Activated CD4-positive, alpha-beta memory T cell treated with anti-CD3 and anti-CD28 coated beads for 36 hours (primary cell): ENCODE measurements at regions of chr5 and their contacts with region 1.

Region 1: GRCh38 chr5:139417214-139417613 is 13.3 kb upstream of the SPATA24 start:
- DNase-seq: no peak
- H3K4me3 Mint-ChIP-seq: no peak overlapping the region
- H3K27ac Mint-ChIP-seq: peak overlapping the region; percentile 96
- H3K4me1 Mint-ChIP-seq: peaks cover 56% of the 10 kb centered on the region
- H3K27me3 Mint-ChIP-seq: no peaks in the 10 kb centered on the region

Region 2: GRCh38 chr5:139341650-139342422 is 75.4 kb before region 1 on chr5 and contains the start of gene PAIP2:
- CTCF ChIA-PET with region 1: no interaction called
- POLR2A ChIA-PET with region 1: interaction called, 3 read pairs
- intact Hi-C with region 1: loop called (anchors 1 kb)
- DNase-seq: peak; percentile 98
- H3K4me3 Mint-ChIP-seq: peak within 1 kb of the TSS; percentile 97
- H3K27ac Mint-ChIP-seq: peak within 1 kb of the TSS; percentile 95
- H3K4me1 Mint-ChIP-seq: peaks cover 46% of the 10 kb centered on the region
- H3K27me3 Mint-ChIP-seq: no peaks in the 10 kb centered on the region
- total RNA-seq, gene PAIP2: 104 to 110 TPM

Region 3: GRCh38 chr5:139403787-139404483 is 13.3 kb before region 1 on chr5 and contains the start of gene SPATA24:
- CTCF ChIA-PET with region 1: interaction called, 16 read pairs
- POLR2A ChIA-PET with region 1: interaction called, 22 read pairs
- intact Hi-C with region 1: loop called (anchors 1 kb)
- DNase-seq: peak; percentile 100
- H3K4me3 Mint-ChIP-seq: peak within 1 kb of the TSS; percentile 91
- H3K27ac Mint-ChIP-seq: peak within 1 kb of the TSS; percentile 99
- H3K4me1 Mint-ChIP-seq: peaks cover 34% of the 10 kb centered on the region
- H3K27me3 Mint-ChIP-seq: no peaks in the 10 kb centered on the region
- total RNA-seq, gene SPATA24: 3.7 to 5.2 TPM

Region 4: GRCh38 chr5:139446956-139447779 is 30.0 kb after region 1 on chr5:
- CTCF ChIA-PET with region 1: interaction called, 7 read pairs
- POLR2A ChIA-PET with region 1: interaction called, 27 read pairs
- intact Hi-C with region 1: loop called (anchors 1 kb)
- DNase-seq: peak; percentile 72
- H3K4me3 Mint-ChIP-seq: peak overlapping the region; percentile 7
- H3K27ac Mint-ChIP-seq: peak overlapping the region; percentile 93
- H3K4me1 Mint-ChIP-seq: peaks cover 67% of the 10 kb centered on the region
- H3K27me3 Mint-ChIP-seq: no peaks in the 10 kb centered on the region

Region 5: DNA sequence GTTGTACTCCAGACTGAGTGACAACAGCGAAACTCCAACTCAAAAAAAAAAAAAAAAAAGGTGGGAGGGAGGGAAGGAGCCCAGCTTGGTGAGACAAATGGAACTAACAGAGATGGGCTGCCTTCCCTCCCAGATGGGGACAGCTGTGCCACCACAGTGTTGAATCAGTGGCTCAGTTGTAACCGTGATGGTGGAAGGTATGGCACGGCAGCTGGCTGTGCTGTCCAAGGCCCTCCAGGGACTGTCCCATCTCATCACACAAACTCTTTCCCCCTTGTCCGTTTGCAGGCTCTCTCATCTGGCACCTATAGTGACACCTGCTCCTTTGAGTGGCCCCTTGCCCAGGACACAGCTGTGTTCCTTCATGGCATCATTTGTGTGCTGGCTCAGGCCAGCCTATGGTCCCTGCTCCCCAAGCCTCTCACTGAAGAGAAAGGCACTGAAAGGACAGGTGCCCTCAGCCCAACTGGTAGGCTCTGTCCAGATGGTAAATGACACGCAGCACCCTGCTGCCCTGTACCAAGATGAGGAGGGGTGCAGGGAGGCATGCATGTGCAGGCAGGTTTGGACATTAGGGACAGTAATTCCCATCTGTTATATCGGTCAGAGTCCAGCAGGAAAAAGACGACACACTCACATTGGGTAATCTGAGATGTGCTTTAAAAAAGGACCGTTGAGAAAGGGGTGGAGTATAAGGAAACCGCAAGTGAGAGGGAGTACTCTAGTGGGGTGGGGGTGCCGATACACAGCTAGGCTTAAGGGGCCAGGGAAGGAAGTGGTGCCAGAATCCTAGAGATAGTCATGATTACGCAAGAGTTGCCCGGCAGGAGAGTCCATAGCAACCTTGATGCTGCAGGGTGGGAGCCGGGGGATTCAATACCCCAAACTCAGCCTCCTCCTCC is 57.9 kb after region 1 on chr5:
- CTCF ChIA-PET with region 1: interaction called, 40 read pairs
- POLR2A ChIA-PET with region 1: interaction called, 50 read pairs
- intact Hi-C with region 1: loop called (anchors 2 kb)
- DNase-seq: peak; percentile 55
- H3K4me3 Mint-ChIP-seq: peak overlapping the region; percentile 20
- H3K27ac Mint-ChIP-seq: peak overlapping the region; percentile 93
- H3K4me1 Mint-ChIP-seq: peaks cover 89% of the 10 kb centered on the region
- H3K27me3 Mint-ChIP-seq: no peaks in the 10 kb centered on the region

Region 6: GRCh38 chr5:139574641-139575312 is 157.6 kb after region 1 on chr5:
- CTCF ChIA-PET with region 1: interaction called, 9 read pairs
- POLR2A ChIA-PET with region 1: no interaction called
- intact Hi-C with region 1: loop called (anchors 2 kb)
- DNase-seq: no peak
- H3K4me3 Mint-ChIP-seq: no peak overlapping the region
- H3K27ac Mint-ChIP-seq: peak overlapping the region; percentile 5
- H3K4me1 Mint-ChIP-seq: peaks cover 70% of the 10 kb centered on the region
- H3K27me3 Mint-ChIP-seq: no peaks in the 10 kb centered on the region